ENCODE measurements at regions of chr11 and their contacts with region 1.

Region 1: GRCh38 chr11:108222686-108223448 is at the start of gene ATM:
- DNase-seq: peak; percentile 99 to 100 (median 100)
- ATAC-seq: peak; percentile 97 to 99 (median 98)
- H3K4me3 ChIP-seq: peak within 1 kb of the TSS; percentile 68 to 93 (median 78)
- H3K27ac ChIP-seq: peak within 1 kb of the TSS; percentile 75 to 98 (median 93)
- H3K4me1 ChIP-seq: peaks cover 0 to 81% (median 33%) of the 10 kb centered on the region in 12 donors
- H3K27me3 ChIP-seq: no peaks in the 10 kb centered on the region
- CTCF ChIP-seq: peak; percentile 55 to 95 (median 75)
- POLR2A ChIP-seq: peak in 1 of 2 donors; percentile 47
- total RNA-seq, gene ATM: 25.3 to 50.8 (median 32.8) TPM

Region 2: GRCh38 chr11:108008656-108009496 is 214.0 kb before region 1 on chr11 and contains the start of gene CUL5:
- intact Hi-C with region 1: loop called in 2 of 10 experiments (anchors 2 to 5 kb)
- DNase-seq: peak; percentile 91 to 97 (median 93)
- ATAC-seq: peak; percentile 95 to 98 (median 98)
- H3K4me3 ChIP-seq: peak within 1 kb of the TSS; percentile 71 to 99 (median 88)
- H3K27ac ChIP-seq: peak within 1 kb of the TSS; percentile 85 to 100 (median 98)
- H3K4me1 ChIP-seq: peaks cover 0 to 47% (median 35%) of the 10 kb centered on the region in 12 donors
- H3K27me3 ChIP-seq: no peaks in the 10 kb centered on the region
- CTCF ChIP-seq: peak; percentile 76 to 95 (median 89)
- POLR2A ChIP-seq: peak in 1 of 2 donors; percentile 23
- total RNA-seq, gene CUL5: 22.0 to 46.0 (median 36.8) TPM

Region 3: DNA sequence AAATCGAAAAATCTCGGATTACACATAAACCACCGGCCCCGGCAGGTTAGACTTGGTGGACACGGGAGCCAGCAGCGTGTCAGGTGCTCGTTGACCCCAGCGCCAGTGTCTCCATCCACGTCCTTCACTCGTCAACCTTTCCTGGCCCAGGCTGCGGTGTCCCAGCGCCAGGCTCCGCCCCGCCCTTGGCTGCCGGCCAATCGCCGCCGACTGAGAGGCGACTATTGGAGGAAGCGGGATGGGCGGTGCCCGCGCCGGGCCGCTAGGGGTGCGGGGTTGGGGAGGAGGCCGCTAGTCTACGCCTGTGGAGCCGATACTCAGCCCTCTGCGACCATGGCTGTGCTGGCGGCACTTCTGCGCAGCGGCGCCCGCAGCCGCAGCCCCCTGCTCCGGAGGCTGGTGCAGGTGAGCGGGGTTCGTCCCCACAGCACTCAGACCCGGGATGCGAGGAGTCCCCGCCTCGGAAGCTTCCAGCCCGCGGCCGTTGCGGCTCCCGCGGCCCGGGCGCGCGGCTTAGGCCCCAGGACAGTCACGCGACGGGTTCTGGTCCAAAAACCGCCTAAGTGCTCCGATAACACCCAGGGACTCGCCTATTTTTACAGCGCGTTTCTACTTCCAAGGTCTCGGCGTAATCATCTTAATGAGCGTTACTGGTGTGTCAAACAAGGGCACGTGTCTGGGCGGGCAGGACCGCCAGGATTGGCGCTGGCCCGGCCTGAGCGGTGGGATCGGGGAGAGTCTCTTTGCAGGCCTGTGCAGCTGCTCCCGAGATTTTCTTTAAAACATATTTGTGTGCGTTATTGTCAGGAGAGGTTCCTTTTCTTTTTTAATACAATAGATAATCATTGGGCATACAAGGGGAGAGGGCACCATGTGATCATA is 101.4 kb before region 1 on chr11 and contains the start of gene ACAT1:
- intact Hi-C with region 1: loop called in 7 of 10 experiments (anchors 1 to 5 kb)
- DNase-seq: peak; percentile 98 to 100 (median 99)
- ATAC-seq: peak; percentile 88 to 96 (median 94)
- H3K4me3 ChIP-seq: peak within 1 kb of the TSS; percentile 38 to 85 (median 74)
- H3K27ac ChIP-seq: peak within 1 kb of the TSS; percentile 90 to 97 (median 94)
- H3K4me1 ChIP-seq: peaks cover 0 to 55% (median 31%) of the 10 kb centered on the region in 12 donors
- H3K27me3 ChIP-seq: peaks cover 0 to 3% (median 0%) of the 10 kb centered on the region in 9 donors
- CTCF ChIP-seq: peak in 10 of 12 donors; percentile 27 to 49 (median 33)
- POLR2A ChIP-seq: peak; percentile 66 to 94
- total RNA-seq, gene ACAT1: 206 to 1,337 (median 394) TPM

Region 4: GRCh38 chr11:108170184-108170583 is 52.7 kb before region 1 on chr11:
- intact Hi-C with region 1: loop called in 1 of 10 experiments (anchors 10 kb)
- DNase-seq: no peak
- ATAC-seq: no peak
- H3K4me3 ChIP-seq: peak overlapping the region in 9 of 12 donors; percentile 11 to 46 (median 31)
- H3K27ac ChIP-seq: peak overlapping the region in 7 of 12 donors; percentile 10 to 50 (median 23)
- H3K4me1 ChIP-seq: peaks cover 0 to 10% (median 0%) of the 10 kb centered on the region in 12 donors
- H3K27me3 ChIP-seq: no peaks in the 10 kb centered on the region
- CTCF ChIP-seq: no peak
- POLR2A ChIP-seq: no peak

Region 5: GRCh38 chr11:108467091-108467823 is 244.4 kb after region 1 on chr11 and contains the start of gene C11orf65:
- intact Hi-C with region 1: loop called in 2 of 10 experiments (anchors 2 to 5 kb)
- DNase-seq: peak; percentile 96 to 97 (median 96)
- ATAC-seq: peak; percentile 100
- H3K4me3 ChIP-seq: peak within 1 kb of the TSS; percentile 49 to 83 (median 68)
- H3K27ac ChIP-seq: peak within 1 kb of the TSS; percentile 84 to 100 (median 96)
- H3K4me1 ChIP-seq: peaks cover 0 to 16% (median 5%) of the 10 kb centered on the region in 12 donors
- H3K27me3 ChIP-seq: no peaks in the 10 kb centered on the region
- CTCF ChIP-seq: no peak
- POLR2A ChIP-seq: peak; percentile 77 to 98
- total RNA-seq, gene C11orf65: 0.33 to 1.9 (median 1.1) TPM in 6 of 9 donors, not detected in the others

Region 6: DNA sequence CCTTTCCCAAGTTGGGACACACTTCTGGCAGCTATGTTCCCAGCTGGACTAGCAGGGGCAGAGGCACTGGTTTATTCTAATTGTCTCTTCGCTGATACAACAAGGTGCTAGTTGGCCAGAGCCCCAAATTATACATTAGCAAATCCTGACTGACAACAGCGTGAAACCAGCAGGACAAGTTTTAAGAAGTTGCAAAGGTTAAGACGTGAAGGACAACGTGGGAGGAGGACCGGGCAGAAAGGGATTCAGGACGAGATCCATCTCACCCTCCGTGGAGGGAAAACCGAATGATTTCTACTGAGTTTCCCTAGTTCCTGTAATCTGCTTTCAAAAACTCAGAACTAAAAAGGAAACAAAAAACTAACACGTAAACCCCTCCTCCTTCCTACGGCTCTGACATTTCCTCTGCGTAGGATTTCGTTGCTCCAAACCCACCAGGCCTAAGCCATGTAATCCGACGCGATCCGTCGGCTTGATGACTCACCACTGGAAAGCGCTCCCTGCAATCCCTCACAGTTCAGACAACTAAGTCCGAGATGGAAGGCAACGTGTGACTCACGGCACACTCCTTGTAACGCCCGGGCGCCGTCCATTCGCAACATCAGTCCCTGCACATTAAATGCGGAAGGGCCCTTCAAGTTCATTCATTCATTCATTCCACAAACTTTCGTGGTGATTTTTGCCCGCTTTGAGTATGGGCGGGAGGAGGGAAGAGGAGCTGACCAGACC is 274.6 kb after region 1 on chr11:
- intact Hi-C with region 1: loop called in 1 of 10 experiments (anchors 10 kb)
- DNase-seq: peak; percentile 84 to 92 (median 87)
- ATAC-seq: peak; percentile 97 to 98 (median 98)
- H3K4me3 ChIP-seq: peak overlapping the region; percentile 64 to 95 (median 73)
- H3K27ac ChIP-seq: peak overlapping the region; percentile 84 to 98 (median 94)
- H3K4me1 ChIP-seq: peaks cover 0 to 16% (median 5%) of the 10 kb centered on the region in 12 donors
- H3K27me3 ChIP-seq: no peaks in the 10 kb centered on the region
- CTCF ChIP-seq: no peak
- POLR2A ChIP-seq: peak in 1 of 2 donors; percentile 82

Measured in heart left ventricle (tissue), 16 donors.